Calu3 (cell line): ENCODE measurements at regions of chrX and their contacts with region 1.

Region 1: GRCh38 chrX:26914232-26914631 is 548.9 kb downstream of the PPP4R3C start:
- DNase-seq: no peak
- H3K4me3 Mint-ChIP-seq: no peak overlapping the region
- H3K27ac Mint-ChIP-seq: no peak overlapping the region
- H3K4me1 Mint-ChIP-seq: no peaks in the 10 kb centered on the region
- H3K27me3 Mint-ChIP-seq: no peaks in the 10 kb centered on the region
- CTCF ChIP-seq: no peak

Region 2: DNA sequence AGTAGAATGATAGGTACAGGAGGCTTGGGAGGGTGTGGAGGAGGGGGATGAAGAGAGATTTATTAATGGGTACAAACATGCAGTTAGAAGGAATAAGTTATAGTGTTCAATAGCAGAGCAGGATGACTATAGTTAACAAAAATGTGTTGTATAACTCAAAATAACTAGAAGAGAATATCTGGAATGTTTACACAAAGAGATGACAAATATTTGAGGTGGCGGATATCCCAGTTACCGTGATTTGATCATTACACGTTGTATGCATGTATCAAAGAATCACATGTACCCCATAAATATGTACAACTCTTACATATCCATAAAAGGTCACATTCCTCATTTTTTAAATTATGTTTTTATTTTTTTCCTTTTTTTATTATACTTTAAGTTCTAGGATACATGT is 241.7 kb before region 1 on chrX:
- CTCF ChIA-PET with region 1: no interaction called
- intact Hi-C with region 1: no loop called
- DNase-seq: no peak
- H3K4me3 Mint-ChIP-seq: no peak overlapping the region
- H3K27ac Mint-ChIP-seq: no peak overlapping the region
- H3K4me1 Mint-ChIP-seq: no peaks in the 10 kb centered on the region
- H3K27me3 Mint-ChIP-seq: no peaks in the 10 kb centered on the region
- CTCF ChIP-seq: no peak

Region 3: GRCh38 chrX:26788402-26788998 is 125.7 kb before region 1 on chrX:
- CTCF ChIA-PET with region 1: no interaction called
- intact Hi-C with region 1: loop called (anchors 5 kb)
- DNase-seq: no peak
- H3K4me3 Mint-ChIP-seq: no peak overlapping the region
- H3K27ac Mint-ChIP-seq: peak overlapping the region; percentile 54
- H3K4me1 Mint-ChIP-seq: peaks cover 30% of the 10 kb centered on the region
- H3K27me3 Mint-ChIP-seq: no peaks in the 10 kb centered on the region
- CTCF ChIP-seq: no peak